Colonic mucosa (tissue), 4 donors: ENCODE measurements at regions of chr7 and their contacts with region 1.

Region 1: DNA sequence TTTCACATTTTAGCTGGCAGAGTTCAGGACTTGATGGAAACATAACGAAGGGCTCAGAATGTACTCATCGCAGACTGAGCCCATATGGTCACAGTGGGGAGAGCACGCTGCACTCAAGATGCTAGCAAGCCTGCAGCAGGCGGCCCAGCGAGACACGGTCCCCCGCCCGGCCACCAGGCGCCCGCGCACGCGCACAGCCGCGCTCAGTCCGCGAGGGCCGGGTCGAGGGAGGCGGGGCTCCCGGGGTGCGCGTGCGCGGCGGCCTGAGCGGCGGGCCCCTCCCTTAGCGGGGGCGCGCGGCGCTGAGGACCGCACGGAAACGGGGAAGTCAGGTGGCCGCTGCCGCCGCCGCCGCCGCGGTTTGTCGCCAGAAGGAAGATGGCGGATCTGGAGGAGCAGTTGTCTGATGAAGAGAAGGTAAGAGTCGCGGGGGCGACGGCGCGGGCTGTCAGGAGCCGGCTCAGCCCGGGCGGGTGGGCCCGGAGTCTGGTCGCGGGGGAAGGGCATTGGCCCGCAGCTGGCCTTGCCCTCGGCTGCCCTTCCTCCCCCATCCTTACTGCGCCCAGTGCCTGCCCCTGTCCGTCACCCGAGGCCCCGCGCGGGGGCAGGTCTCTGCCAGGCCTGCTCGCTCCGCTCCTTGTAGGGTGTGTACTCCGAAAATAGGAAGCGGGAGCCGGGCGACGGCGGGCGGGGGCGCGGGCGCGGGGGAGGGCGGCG is at the start of gene CAPZA2:
- DNase-seq: peak; percentile 93
- H3K4me3 ChIP-seq: peak within 1 kb of the TSS; percentile 82
- H3K27ac ChIP-seq: peak within 1 kb of the TSS; percentile 99
- H3K4me1 ChIP-seq: no peaks in the 10 kb centered on the region
- H3K27me3 ChIP-seq: no peaks in the 10 kb centered on the region
- CTCF ChIP-seq: no peak
- total RNA-seq, gene CAPZA2: 186 to 323 TPM

Region 2: GRCh38 chr7:116953727-116954442 is 91.5 kb after region 1 on chr7:
- intact Hi-C with region 1: loop called (anchors 10 kb)
- DNase-seq: peak; percentile 56
- H3K4me3 ChIP-seq: peak overlapping the region; percentile 94
- H3K27ac ChIP-seq: peak overlapping the region; percentile 98
- H3K4me1 ChIP-seq: no peaks in the 10 kb centered on the region
- H3K27me3 ChIP-seq: no peaks in the 10 kb centered on the region
- CTCF ChIP-seq: no peak